ENCODE measurements at regions of chr6 and their contacts with region 1.

Region 1: GRCh38 chr6:34196126-34196830 is 40.4 kb upstream of the HMGA1 start:
- DNase-seq: peak; percentile 88 to 91
- H3K4me3 ChIP-seq: peak overlapping the region; percentile 44 to 56
- H3K27ac ChIP-seq: no peak overlapping the region
- H3K4me1 ChIP-seq: peaks cover 0 to 13% (median 8%) of the 10 kb centered on the region in 4 donors
- H3K27me3 ChIP-seq: no peaks in the 10 kb centered on the region
- CTCF ChIP-seq: peak; percentile 98 to 99

Region 2: GRCh38 chr6:34414999-34415858 is 219.0 kb after region 1 on chr6:
- intact Hi-C with region 1: loop called (anchors 2 kb)
- DNase-seq: peak; percentile 75 to 79
- H3K4me3 ChIP-seq: peak overlapping the region in 1 of 2 donors; percentile 10
- H3K27ac ChIP-seq: peak overlapping the region; percentile 76 to 77
- H3K4me1 ChIP-seq: peaks cover 0 to 12% (median 8%) of the 10 kb centered on the region in 4 donors
- H3K27me3 ChIP-seq: no peaks in the 10 kb centered on the region
- CTCF ChIP-seq: peak; percentile 70 to 90

Measured in tibial artery (tissue), 4 donors.